ENCODE measurements at regions of chr15 and their contacts with region 1.

Region 1: GRCh38 chr15:56040081-56041035 is 46.9 kb upstream of the NEDD4 start:
- DNase-seq: peak in 1 of 5 donors; percentile 49
- H3K4me3 ChIP-seq: no peak overlapping the region
- H3K4me3 Mint-ChIP-seq: no peak overlapping the region
- H3K27ac ChIP-seq: no peak overlapping the region
- H3K27ac Mint-ChIP-seq: no peak overlapping the region
- H3K4me1 ChIP-seq: peaks cover 43% of the 10 kb centered on the region
- H3K4me1 Mint-ChIP-seq: peaks cover 27 to 52% (median 40%) of the 10 kb centered on the region in 4 donors
- H3K27me3 ChIP-seq: no peaks in the 10 kb centered on the region
- H3K27me3 Mint-ChIP-seq: no peaks in the 10 kb centered on the region

Region 2: GRCh38 chr15:55993111-55993803 is 47.1 kb before region 1 on chr15 and contains the start of gene NEDD4:
- CTCF ChIA-PET with region 1: interaction called, 5 read pairs
- POLR2A ChIA-PET with region 1: interaction called, 3 read pairs
- intact Hi-C with region 1: loop called (anchors 1 kb)
- DNase-seq: peak; percentile 64 to 82 (median 74)
- H3K4me3 ChIP-seq: peak within 1 kb of the TSS; percentile 36 to 61
- H3K4me3 Mint-ChIP-seq: peak within 1 kb of the TSS; percentile 89 to 94 (median 92)
- H3K27ac ChIP-seq: no peak within 1 kb of the TSS
- H3K27ac Mint-ChIP-seq: peak within 1 kb of the TSS; percentile 17 to 85 (median 61)
- H3K4me1 ChIP-seq: peaks cover 15% of the 10 kb centered on the region
- H3K4me1 Mint-ChIP-seq: peaks cover 10 to 27% (median 17%) of the 10 kb centered on the region in 4 donors
- H3K27me3 ChIP-seq: no peaks in the 10 kb centered on the region
- H3K27me3 Mint-ChIP-seq: no peaks in the 10 kb centered on the region
- total RNA-seq, gene NEDD4: 4.2 to 5.8 TPM